Brain microvascular endothelial cell (primary cell): ENCODE measurements at regions of chr13 and their contacts with region 1.

Region 1: DNA sequence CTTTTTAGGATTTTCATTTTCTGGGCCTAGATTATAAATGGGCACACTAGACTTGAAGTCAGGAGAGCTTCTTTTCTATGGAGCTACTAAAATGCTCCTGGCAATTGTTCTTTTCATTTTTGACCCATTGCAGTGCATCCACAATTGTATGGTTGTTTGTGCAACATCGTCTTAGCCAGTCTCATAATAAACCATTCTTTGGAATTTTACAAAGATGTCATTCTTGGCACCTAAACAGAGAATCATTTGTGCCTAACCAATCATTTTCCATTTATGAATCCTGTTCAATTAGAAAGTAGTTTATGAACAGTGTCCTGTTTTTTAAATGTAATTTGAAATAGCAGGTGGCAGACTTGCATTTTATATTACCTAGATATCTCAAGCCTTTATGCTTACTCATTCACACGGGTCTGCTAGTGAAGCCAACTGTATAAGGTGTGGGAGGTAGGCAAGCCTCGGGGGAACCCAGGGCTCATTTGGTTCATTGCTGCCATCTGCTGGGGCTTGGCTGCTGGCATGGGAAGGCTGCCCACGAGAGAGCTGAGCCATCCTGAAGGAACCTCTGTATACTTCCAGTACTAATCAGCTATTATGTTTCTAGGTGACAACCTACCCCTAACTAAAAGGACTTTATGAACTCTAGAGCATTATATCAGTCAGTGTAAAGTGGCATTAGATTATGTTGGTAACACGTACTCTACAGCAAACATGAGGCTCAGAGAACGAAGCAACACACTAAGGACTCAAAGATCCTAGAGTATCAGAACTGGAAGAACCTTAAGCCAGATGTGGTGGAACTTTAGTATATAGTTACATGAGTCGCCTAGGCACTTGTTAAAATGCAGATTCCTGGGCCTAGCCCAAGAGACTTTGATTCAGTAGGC is 60.0 kb downstream of the TPT1 start:
- DNase-seq: peak; percentile 70
- H3K4me3 ChIP-seq: no peak overlapping the region
- H3K27ac ChIP-seq: no peak overlapping the region
- H3K27me3 ChIP-seq: no peaks in the 10 kb centered on the region
- CTCF ChIP-seq: peak; percentile 96

Region 2: GRCh38 chr13:45047394-45048310 is 233.3 kb before region 1 on chr13:
- in situ Hi-C with region 1: loop called (anchors 25 kb)
- DNase-seq: peak; percentile 76
- H3K4me3 ChIP-seq: peak overlapping the region; percentile 52
- H3K27ac ChIP-seq: no peak overlapping the region
- H3K27me3 ChIP-seq: no peaks in the 10 kb centered on the region
- CTCF ChIP-seq: peak; percentile 88